ENCODE measurements at regions of chr10 and their contacts with region 1.

Region 1: DNA sequence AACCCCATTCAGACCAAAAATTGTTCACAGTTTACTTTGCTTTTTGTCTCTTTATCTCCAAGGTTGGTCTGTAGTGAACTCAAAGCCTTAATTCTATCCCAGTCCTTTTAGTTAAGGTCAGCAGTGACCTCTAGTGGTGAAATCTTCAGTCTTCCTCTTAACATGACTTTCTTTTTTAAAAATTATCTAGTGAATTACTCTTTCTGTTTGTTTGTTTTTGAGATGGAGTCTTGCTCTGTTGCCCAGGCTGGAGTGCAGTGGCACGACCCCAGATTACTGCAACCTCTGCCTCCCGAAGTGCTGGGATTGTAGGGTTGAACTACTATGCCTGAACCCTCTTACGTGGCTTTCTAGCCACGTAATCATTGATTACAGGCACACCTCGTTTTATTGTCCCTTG is 25.0 kb downstream of the ZNF487 start:
- DNase-seq: no peak
- H3K4me3 ChIP-seq: no peak overlapping the region
- H3K27ac ChIP-seq: no peak overlapping the region
- H3K4me1 ChIP-seq: no peaks in the 10 kb centered on the region
- H3K27me3 ChIP-seq: no peaks in the 10 kb centered on the region
- CTCF ChIP-seq: peak; percentile 54 to 74 (median 58)
- EP300 ChIP-seq: no peak
- POLR2A ChIP-seq: no peak

Region 2: GRCh38 chr10:43299579-43299978 is 162.4 kb before region 1 on chr10:
- intact Hi-C with region 1: loop called (anchors 5 kb)
- DNase-seq: no peak
- H3K4me3 ChIP-seq: no peak overlapping the region
- H3K27ac ChIP-seq: no peak overlapping the region
- H3K4me1 ChIP-seq: no peaks in the 10 kb centered on the region
- H3K27me3 ChIP-seq: no peaks in the 10 kb centered on the region
- CTCF ChIP-seq: no peak
- EP300 ChIP-seq: no peak
- POLR2A ChIP-seq: no peak

Measured in ovary (tissue), 10 donors.